ENCODE measurements at regions of chr1 and their contacts with region 1.

Region 1: DNA sequence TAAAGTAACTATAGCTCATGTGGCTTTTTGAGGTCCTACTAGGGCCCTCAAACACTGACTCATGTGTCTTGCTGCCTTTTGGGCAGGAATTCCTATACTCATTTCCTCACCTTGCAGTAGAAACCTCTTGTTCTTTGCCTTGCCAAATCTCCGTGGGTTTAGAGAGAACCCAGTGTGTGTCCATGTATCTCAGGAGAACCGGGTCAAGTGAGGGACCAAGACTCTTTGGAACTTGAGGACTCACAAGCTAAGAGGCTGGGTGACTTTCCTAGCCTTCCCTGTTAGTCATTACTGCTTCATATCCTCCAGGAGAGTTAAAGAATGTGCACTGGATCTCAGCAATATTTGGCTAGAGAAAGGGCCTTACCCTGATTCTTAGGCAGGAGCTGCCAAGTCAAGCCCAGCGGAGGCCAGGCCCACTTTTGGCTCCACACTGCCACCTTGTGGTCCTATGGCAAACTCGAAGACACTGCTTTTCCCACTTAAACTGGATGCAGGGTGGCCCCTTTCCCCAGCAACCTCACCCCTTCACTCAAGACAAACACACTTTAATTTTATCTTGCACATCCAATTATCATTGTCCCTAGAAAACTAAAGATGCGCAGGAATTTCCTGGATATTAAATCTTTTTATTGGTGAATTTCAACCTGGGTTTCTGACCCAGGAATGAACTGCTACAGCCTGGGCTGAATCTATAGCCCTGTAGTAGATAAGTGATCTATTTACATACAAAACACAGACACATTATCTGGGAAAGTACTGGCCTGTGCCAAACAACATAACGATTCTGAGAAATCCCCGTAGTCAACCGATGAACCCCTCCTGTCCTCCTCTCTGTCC is 10.6 kb downstream of the AVPR1B start:
- DNase-seq: peak; percentile 71
- ATAC-seq: peak; percentile 89
- H3K4me3 Mint-ChIP-seq: no peak overlapping the region
- H3K27ac Mint-ChIP-seq: peak overlapping the region; percentile 73
- H3K4me1 Mint-ChIP-seq: peaks cover 34% of the 10 kb centered on the region
- H3K27me3 Mint-ChIP-seq: no peaks in the 10 kb centered on the region
- CTCF ChIP-seq: peak; percentile 70

Region 2: DNA sequence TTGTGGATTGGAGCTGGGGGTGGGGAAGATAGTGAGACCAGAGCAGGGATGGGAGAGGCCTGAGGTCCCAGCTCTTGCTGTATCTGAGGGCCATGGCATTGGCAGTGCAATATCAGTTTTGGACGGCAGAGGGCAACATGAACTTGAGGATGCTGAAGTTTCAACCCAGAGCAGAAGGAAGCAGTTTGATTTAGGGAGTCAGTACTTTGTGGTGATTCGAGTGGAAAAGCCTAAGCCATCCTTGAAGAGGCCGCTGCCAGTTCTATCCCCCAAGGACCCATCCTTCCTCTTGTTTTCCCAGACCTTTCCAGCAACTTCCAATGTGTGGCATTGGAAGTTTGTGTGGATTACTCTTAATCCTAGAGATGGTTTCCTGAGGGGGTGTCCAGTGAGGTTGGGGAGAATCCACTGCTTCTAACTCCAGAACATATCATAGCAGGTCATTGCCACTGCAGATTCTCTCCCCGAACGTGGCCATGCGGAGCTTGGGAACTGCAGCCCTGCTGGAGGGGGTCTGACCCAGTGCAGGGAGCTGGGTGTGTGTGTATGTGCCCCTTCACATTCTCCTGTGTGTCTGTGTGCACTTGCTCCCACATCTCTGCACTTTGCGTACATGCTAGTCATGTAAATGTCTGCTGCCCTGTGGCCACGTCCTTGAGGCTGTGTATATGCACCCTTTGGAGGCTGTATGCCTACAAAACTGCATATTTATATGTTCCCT is 187.4 kb before region 1 on chr1:
- CTCF ChIA-PET with region 1: interaction called, 12 read pairs
- POLR2A ChIA-PET with region 1: no interaction called
- intact Hi-C with region 1: loop called (anchors 1 kb)
- DNase-seq: peak; percentile 58
- ATAC-seq: peak; percentile 93
- H3K4me3 Mint-ChIP-seq: no peak overlapping the region
- H3K27ac Mint-ChIP-seq: no peak overlapping the region
- H3K4me1 Mint-ChIP-seq: no peaks in the 10 kb centered on the region
- H3K27me3 Mint-ChIP-seq: peaks cover 5% of the 10 kb centered on the region
- CTCF ChIP-seq: no peak

Region 3: GRCh38 chr1:205983925-205984725 is 122.4 kb before region 1 on chr1:
- CTCF ChIA-PET with region 1: interaction called, 154 read pairs
- POLR2A ChIA-PET with region 1: interaction called, 10 read pairs
- intact Hi-C with region 1: loop called (anchors 1 kb)
- DNase-seq: peak; percentile 39
- ATAC-seq: peak; percentile 93
- H3K4me3 Mint-ChIP-seq: no peak overlapping the region
- H3K27ac Mint-ChIP-seq: no peak overlapping the region
- H3K4me1 Mint-ChIP-seq: peaks cover 2% of the 10 kb centered on the region
- H3K27me3 Mint-ChIP-seq: no peaks in the 10 kb centered on the region
- CTCF ChIP-seq: no peak

Region 4: DNA sequence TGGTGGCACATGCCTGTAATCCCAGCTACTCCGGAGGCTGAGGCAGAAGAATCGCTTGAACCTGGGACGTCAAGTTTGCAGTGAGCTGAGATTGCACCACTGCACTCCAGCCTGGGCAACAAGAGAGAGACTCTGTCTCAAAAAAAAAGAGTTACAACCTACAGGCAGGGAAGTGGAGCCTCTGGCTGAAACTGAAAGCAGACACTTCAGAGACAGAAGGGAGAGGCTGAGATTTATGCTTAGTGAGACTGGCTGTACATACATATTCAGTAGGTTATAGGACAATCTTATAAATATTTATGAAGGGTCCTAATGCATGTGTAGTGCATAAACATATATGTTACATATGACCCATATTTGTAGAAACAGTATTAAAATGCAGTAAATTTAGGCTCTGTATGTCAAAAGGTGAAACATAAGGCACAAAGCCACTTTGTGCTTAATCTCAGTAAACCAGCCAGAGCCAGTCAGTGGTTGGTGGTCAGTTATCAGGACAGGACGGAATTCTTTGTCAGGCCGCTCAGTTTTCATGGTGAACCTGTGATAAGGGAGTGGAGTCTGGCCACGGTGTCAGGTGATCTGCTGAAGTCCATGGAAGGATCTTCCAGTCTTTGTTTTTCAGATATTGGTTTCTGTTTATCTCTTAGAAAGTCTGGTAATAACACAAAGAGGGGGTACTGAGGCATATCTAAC is 39.9 kb before region 1 on chr1:
- CTCF ChIA-PET with region 1: interaction called, 5 read pairs
- POLR2A ChIA-PET with region 1: no interaction called
- intact Hi-C with region 1: loop called (anchors 2 kb)
- DNase-seq: no peak
- ATAC-seq: peak; percentile 78
- H3K4me3 Mint-ChIP-seq: peak overlapping the region; percentile 73
- H3K27ac Mint-ChIP-seq: peak overlapping the region; percentile 85
- H3K4me1 Mint-ChIP-seq: peaks cover 57% of the 10 kb centered on the region
- H3K27me3 Mint-ChIP-seq: no peaks in the 10 kb centered on the region
- CTCF ChIP-seq: no peak

Region 5: GRCh38 chr1:206080026-206080820 is 26.3 kb before region 1 on chr1:
- CTCF ChIA-PET with region 1: interaction called, 9 read pairs
- POLR2A ChIA-PET with region 1: interaction called, 12 read pairs
- intact Hi-C with region 1: no loop called
- DNase-seq: no peak
- ATAC-seq: no peak
- H3K4me3 Mint-ChIP-seq: no peak overlapping the region
- H3K27ac Mint-ChIP-seq: peak overlapping the region; percentile 10
- H3K4me1 Mint-ChIP-seq: peaks cover 39% of the 10 kb centered on the region
- H3K27me3 Mint-ChIP-seq: no peaks in the 10 kb centered on the region
- CTCF ChIP-seq: no peak

Measured in activated B cell treated with CpG ODN at 0.5 μM for 24 hours (primary cell).